PC-9 (cell line): ENCODE measurements at regions of chr3 and their contacts with region 1.

Region 1: DNA sequence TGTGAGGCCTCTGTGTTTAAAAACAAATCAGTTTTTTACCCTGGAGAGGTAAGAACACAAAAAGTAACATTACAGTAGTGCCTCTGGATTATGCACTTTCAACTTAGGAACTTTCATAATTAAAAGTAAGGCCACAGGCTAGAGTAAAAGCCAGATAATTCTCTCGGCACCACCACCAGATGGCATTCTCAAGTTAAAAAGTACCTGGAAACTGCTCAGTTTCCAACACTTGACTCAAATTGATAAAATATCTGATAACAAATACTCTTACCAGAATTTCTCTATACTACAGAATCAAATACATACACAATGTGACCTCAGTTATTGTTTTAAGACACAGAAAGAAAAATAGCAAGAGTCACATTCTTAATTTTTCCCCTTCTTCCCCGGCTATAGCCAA is 19.9 kb downstream of the SPICE1 start:
- DNase-seq: peak; percentile 12 to 46
- H3K4me3 ChIP-seq: no peak overlapping the region
- H3K27ac ChIP-seq: no peak overlapping the region; the same call in 1 of the 2 replicates
- H3K4me1 ChIP-seq: peaks cover 7% of the 10 kb centered on the region
- H3K27me3 ChIP-seq: no peaks in the 10 kb centered on the region
- CTCF ChIP-seq: peak; percentile 69

Region 2: DNA sequence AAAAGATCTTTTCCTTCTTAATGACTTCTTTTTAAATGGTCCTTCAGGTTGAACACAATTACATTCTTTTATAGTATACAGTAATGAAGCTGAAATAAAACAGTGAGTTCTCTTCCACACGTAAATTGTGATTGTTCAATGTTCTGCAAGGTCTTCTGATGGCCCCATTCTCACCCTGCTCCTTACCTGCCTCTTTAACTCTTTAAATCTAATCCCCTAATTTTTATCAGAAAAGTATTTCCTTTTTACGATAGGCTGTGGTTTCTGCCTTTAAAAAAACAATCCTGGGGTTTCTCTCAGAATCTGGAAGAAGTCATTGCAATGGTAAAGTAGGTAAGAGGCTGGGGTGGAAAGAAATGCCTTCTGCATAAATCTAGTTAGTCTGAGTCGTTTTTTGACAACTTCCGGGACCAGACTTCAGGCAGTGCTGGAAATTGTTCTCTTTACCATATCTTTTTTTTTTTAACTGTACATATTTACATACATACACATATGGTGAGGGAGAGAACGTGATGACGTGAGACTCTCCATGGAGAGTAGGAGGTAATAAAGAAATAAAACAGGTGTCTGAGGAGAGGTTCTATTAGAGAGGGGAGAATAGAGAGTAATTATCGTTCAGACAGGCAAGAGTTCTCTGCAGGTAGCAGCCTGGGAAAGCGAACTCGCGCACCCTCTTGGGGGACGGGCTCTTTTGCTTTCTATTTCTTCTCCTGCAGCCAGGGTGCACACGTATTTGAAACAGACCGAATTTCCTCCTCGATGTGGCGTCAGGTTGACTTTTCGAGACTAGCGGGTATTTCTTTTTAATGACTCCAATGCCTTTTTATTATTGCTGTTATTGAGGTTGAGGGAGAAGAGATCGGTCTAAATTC is 37.0 kb after region 1 on chr3 and contains the start of gene SIDT1:
- CTCF ChIA-PET with region 1: interaction called, 3 read pairs
- POLR2A ChIA-PET with region 1: interaction called, 9 read pairs
- intact Hi-C with region 1: loop called (anchors 5 kb)
- DNase-seq: peak; percentile 54 to 55
- H3K4me3 ChIP-seq: peak within 1 kb of the TSS; percentile 64
- H3K27ac ChIP-seq: peak within 1 kb of the TSS; percentile 33
- H3K4me1 ChIP-seq: peaks cover 32% of the 10 kb centered on the region
- H3K27me3 ChIP-seq: no peaks in the 10 kb centered on the region
- CTCF ChIP-seq: no peak
- total RNA-seq, gene SIDT1: 1.2 and 3.3 TPM in 2 replicates

Region 3: DNA sequence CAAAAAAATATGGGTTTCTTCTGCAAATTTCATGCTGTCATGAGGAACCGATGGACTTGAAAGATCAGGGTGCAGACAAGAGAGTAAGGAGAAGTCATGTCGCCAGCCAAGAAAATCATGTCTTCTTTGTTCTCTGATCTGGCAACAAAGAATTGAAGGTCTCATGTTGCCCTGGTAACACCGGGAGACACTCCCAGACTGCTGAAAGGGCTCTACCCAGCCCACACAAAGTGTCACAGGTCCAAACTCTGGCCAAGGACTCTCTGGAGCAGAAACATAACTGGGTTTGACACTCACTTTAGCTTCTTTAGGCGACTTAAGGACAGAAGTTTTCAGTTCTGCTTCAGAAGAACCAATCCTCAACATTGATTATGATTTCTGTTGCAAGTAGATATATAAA is 80.2 kb after region 1 on chr3:
- CTCF ChIA-PET with region 1: interaction called, 8 read pairs
- POLR2A ChIA-PET with region 1: interaction called, 5 read pairs
- intact Hi-C with region 1: loop called (anchors 1 kb)
- DNase-seq: no peak
- H3K4me3 ChIP-seq: no peak overlapping the region
- H3K27ac ChIP-seq: no peak overlapping the region
- H3K4me1 ChIP-seq: peaks cover 13% of the 10 kb centered on the region
- H3K27me3 ChIP-seq: no peaks in the 10 kb centered on the region
- CTCF ChIP-seq: no peak

Region 4: DNA sequence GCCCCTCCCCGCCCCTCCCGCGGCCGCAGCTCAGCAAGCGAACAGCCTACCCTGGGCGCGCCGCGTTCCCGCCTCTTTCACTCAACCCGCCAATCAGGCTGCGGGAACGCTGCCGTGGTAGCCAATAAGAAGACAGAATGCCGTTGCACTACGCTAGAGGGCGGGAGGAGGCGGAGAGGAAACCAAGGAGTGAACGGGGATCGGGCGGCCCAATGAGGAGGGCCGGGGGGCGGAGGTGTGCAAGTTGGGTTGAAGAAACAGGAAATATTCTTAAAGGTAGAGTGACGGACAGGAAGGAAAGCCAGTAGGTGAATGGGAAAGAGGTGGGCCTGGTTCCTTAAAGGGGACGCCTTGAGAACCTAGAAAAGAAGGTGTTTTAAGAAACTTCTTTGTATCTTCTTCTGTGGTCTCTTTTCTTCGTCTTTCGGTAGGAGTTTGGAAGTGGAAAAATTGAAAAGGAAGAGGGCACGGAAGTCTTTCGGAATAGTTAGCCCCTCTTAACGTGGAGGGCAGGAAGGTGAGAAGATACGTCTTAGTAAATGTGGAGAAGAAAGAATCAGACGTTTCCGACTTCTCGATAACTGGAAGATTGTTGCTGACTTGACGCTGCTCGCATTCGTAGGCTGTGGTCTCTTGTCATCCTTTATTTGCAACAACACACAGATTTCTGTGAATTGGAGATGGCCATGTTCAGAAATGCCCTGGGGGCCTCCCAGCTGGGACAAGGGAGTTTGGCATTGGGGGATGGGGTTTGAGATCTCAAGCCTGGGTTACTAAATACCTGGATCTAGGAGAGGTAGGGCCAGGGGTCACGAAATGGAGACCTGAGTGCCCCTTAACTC is 201.8 kb after region 1 on chr3:
- CTCF ChIA-PET with region 1: no interaction called
- POLR2A ChIA-PET with region 1: no interaction called
- intact Hi-C with region 1: loop called (anchors 10 kb)
- DNase-seq: peak; percentile 96 to 99
- H3K4me3 ChIP-seq: peak overlapping the region; percentile 76
- H3K27ac ChIP-seq: peak overlapping the region; percentile 40
- H3K4me1 ChIP-seq: peaks cover 13% of the 10 kb centered on the region
- H3K27me3 ChIP-seq: no peaks in the 10 kb centered on the region
- CTCF ChIP-seq: no peak